Esophagus squamous epithelium (tissue), 5 donors: ENCODE measurements at regions of chr19 and their contacts with region 1.

Region 1: GRCh38 chr19:6516659-6517291 is 14.1 kb upstream of the TNFSF9 start:
- DNase-seq: no peak
- H3K4me3 ChIP-seq: peak overlapping the region; percentile 46 to 81 (median 74)
- H3K27ac ChIP-seq: peak overlapping the region; percentile 77 to 89 (median 88)
- H3K4me1 ChIP-seq: peaks cover 4 to 39% (median 22%) of the 10 kb centered on the region in 3 donors
- H3K27me3 ChIP-seq: peaks cover 0 to 3% (median 0%) of the 10 kb centered on the region in 4 donors
- CTCF ChIP-seq: peak; percentile 92 to 99 (median 97)
- POLR2A ChIP-seq: no peak

Region 2: DNA sequence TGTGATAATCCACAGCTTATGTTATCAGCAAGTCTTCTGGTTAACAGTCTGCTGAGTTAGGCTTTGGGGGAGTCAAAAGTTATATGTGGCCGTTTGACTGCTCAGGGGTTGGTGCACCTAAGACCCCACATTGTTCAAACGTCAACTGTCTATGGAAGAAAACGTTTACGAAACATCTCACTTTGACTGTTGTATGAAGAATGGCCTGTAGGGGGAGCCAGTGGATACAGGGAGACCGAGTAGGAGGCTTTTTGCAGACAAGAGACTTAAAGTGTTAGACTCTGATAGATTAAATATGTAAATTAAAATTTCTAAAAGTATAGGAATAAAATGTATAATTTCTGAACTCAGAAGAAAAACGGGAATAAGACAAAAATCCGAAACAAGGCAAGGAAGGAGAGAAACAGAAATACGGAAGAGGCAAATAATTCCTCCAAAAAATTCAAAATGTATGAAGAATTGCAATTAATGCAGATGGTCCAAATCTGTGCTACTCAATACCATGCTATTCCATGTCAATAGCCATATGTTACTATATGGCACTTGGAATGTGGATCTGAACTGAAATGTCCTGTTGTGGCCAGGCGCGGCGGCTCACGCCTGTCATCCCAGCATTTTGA is 115.3 kb after region 1 on chr19:
- intact Hi-C with region 1: loop called (anchors 5 kb)
- DNase-seq: peak; percentile 13
- H3K4me3 ChIP-seq: no peak overlapping the region
- H3K27ac ChIP-seq: no peak overlapping the region
- H3K4me1 ChIP-seq: no peaks in the 10 kb centered on the region
- H3K27me3 ChIP-seq: peaks cover 0 to 6% (median 0%) of the 10 kb centered on the region in 4 donors
- CTCF ChIP-seq: peak; percentile 55 to 87 (median 86)
- POLR2A ChIP-seq: no peak

Region 3: DNA sequence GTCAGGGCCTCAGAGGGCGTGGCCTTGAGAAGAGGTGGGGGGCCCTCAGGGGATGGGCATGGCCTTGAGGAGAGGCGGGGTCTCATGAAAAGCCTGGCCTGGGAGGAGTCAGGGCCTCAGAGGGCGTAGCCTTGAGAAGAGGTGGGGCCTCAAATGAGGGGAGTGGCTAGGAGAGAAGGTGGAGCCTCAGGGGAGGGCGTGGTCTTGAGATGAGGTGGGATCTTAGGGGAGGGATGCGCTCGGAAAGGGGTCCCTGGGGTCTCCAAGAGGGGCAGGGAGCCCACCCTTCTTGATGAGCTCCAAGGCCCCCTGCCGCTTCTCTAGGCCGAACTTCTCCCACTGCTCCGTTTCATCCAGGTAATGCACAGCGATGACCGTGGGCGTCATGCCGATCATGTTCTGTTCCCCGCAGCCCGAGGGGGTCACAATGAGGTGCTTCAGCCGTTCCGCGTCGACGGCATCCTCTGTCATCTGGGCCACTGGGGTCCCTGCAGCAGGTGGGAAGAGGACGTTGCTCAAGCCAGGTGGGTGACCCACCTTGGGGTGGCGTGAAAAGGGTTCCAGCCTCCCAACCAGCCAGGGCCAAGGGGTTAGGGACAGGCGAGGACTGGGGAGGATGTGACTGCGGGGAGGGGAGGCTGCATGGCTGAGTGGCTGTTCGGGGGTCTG is 177.5 kb after region 1 on chr19:
- intact Hi-C with region 1: no loop called
- DNase-seq: no peak
- H3K4me3 ChIP-seq: no peak overlapping the region
- H3K27ac ChIP-seq: no peak overlapping the region
- H3K4me1 ChIP-seq: no peaks in the 10 kb centered on the region
- H3K27me3 ChIP-seq: peaks cover 0 to 4% (median 0%) of the 10 kb centered on the region in 4 donors
- CTCF ChIP-seq: no peak
- POLR2A ChIP-seq: no peak